ENCODE measurements at regions of chr5 and their contacts with region 1.

Region 1: GRCh38 chr5:178075840-178076548 is 37.3 kb upstream of the N4BP3 start:
- DNase-seq: peak; percentile 89
- H3K4me3 ChIP-seq: peak overlapping the region; percentile 50
- H3K27ac ChIP-seq: no peak overlapping the region
- H3K4me1 ChIP-seq: peaks cover 44% of the 10 kb centered on the region
- CTCF ChIP-seq: peak; percentile 100

Region 2: DNA sequence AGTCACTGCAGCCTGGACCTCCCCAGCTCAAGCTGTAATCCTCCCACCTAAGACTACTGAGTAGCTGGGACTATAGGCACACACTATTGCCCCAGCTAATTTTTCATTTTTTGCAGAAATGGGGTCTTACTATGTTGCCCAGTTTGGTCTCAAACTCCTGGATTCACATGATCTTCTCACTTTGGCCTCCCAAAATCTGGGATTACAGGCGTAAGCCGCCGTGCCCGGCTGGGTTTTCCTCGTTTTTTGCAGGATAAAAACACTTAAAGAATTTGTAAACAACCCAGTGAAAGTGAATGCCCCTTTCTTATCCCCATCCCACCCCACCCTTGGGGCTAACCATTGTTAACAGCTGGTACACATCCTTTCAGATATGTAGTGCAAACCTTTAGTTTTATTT is 1667.4 kb before region 1 on chr5:
- CTCF ChIA-PET with region 1: no interaction called
- POLR2A ChIA-PET with region 1: interaction called, 10 read pairs
- intact Hi-C with region 1: no loop called
- DNase-seq: no peak
- H3K4me3 ChIP-seq: no peak overlapping the region
- H3K27ac ChIP-seq: no peak overlapping the region
- H3K4me1 ChIP-seq: peaks cover 6% of the 10 kb centered on the region
- CTCF ChIP-seq: no peak

Region 3: DNA sequence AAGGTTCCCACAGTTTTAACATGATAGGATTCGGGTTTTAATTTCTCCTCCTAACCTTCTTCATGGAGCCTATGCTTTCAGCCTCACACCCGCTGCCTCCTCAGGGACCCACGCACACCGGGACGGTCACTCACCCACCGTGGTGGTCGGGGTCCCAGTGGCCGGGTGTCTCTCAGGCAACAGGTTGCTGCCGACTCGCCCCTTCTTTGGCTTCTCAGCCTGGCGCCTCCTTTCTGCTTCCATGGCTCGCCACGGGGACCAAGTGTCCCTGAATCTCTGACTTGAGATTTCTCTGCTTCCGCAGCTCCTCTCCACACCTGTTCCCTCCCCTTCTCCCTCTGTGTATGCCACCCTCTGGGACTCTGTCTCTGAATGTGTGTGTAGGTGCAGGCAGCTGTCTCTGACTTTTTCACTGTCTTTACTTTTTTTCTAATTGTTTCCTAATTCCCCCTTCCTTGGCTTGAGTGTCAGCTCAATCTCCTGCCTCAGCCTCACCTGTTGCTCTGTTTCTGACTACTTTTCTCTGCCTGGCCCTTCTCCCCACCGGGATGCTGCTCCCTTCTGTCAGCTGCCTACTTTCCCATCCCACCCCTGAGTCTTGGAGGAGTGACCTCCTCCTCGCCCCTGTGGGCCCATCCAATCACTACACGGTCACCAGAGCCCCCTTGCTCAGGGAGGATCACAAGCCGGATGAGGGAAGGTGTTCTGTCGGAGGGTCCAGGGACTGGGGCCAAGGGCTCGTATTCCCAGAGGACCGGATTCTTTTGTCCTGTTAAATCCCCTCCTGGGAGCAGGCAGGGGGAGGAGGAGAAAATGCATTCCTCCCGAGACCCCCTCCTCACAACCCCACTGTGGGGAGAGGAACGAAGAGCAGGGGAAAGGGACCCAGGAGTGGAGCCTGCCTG is 80.1 kb before region 1 on chr5 and contains the start of gene PROP1:
- CTCF ChIA-PET with region 1: no interaction called
- POLR2A ChIA-PET with region 1: no interaction called
- intact Hi-C with region 1: no loop called
- DNase-seq: no peak
- H3K4me3 ChIP-seq: no peak within 1 kb of the TSS
- H3K27ac ChIP-seq: no peak within 1 kb of the TSS
- H3K4me1 ChIP-seq: peaks cover 6% of the 10 kb centered on the region
- CTCF ChIP-seq: no peak
- total RNA-seq, gene PROP1: not detected in 2 replicates

Region 4: DNA sequence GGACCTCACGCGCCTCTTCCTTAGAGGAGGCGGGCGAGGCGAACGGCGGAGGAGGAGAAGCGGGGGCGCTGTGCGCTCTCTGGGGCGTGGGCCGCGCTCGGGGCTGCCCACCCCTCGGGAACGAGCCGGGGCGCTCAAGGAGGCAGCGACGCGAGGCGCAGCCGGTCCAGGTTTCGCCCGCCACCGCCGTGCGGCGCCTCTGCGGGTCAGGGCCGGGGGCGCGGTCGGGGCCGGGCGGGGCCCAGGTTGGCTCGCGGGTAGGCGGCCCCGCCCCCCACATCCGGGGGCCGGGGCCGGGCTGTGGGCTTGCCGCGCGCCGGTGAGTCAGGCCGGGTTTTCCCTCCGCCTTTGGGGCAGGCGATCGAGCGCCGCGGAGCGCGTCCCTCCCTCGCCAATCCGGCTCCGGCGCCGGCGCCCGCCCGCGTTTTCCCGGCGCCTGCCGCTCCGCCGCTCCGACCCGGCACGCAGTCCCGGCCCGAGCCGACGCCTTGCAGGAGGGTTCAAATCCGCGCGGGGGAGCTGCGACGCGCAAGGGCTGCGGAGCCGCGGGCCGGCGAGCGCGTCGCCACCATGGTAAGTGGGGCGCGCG is 37.3 kb after region 1 on chr5 and contains the start of gene N4BP3:
- CTCF ChIA-PET with region 1: interaction called, 4 read pairs
- POLR2A ChIA-PET with region 1: interaction called, 6 read pairs
- intact Hi-C with region 1: loop called (anchors 1 kb)
- DNase-seq: peak; percentile 93
- H3K4me3 ChIP-seq: peak within 1 kb of the TSS; percentile 95
- H3K27ac ChIP-seq: peak within 1 kb of the TSS; percentile 90
- H3K4me1 ChIP-seq: peaks cover 49% of the 10 kb centered on the region
- CTCF ChIP-seq: peak; percentile 57
- total RNA-seq, gene N4BP3: 23.7 and 28.3 TPM in 2 replicates

Region 5: GRCh38 chr5:178120868-178121357 is 44.9 kb after region 1 on chr5:
- CTCF ChIA-PET with region 1: interaction called, 17 read pairs
- POLR2A ChIA-PET with region 1: interaction called, 6 read pairs
- intact Hi-C with region 1: loop called (anchors 2 kb)
- DNase-seq: peak; percentile 98
- H3K4me3 ChIP-seq: peak overlapping the region; percentile 37
- H3K27ac ChIP-seq: peak overlapping the region; percentile 90
- H3K4me1 ChIP-seq: peaks cover 81% of the 10 kb centered on the region
- CTCF ChIP-seq: peak; percentile 87

Region 6: DNA sequence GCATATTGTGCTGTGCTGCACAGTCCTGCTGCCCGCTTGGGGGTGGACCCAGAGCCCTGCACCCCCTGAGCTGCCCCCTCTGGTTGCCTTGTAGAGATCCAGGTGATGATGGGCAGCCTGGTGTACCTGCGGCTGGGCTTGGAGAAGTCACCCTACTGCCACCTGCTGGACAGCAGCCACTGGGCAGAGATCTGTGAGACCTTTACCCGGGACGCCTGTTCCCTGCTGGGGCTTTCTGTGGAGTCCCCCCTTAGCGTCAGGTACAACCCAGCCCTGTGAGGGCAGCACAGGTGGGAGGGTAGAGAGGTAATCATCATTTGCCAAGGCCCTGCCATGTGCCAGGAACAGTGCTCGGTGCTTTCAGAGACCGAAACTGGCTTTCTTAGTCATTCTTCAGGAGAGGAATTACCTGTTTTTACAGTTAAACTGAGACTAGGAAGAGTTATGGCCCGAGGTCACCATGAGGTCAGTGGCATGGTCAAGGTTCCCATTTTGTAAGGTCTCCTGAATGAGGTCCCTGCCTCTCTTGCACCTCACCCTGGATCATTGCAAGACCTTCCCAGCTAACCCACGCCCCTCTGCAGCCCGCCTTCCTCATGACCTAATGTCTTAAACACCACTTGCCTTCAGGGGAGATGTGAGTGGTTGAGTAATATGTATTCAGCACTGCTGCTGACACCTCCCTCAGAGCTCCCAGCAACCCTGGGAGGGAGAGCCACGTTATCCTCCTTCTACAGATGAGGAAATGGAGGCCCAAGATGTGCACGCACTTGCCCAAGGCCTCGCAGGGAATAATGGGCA is 70.2 kb after region 1 on chr5:
- CTCF ChIA-PET with region 1: interaction called, 15 read pairs
- POLR2A ChIA-PET with region 1: no interaction called
- intact Hi-C with region 1: loop called (anchors 1 kb)
- DNase-seq: peak; percentile 81
- H3K4me3 ChIP-seq: no peak overlapping the region
- H3K27ac ChIP-seq: no peak overlapping the region
- H3K4me1 ChIP-seq: peaks cover 4% of the 10 kb centered on the region
- CTCF ChIP-seq: peak; percentile 90

Region 7: DNA sequence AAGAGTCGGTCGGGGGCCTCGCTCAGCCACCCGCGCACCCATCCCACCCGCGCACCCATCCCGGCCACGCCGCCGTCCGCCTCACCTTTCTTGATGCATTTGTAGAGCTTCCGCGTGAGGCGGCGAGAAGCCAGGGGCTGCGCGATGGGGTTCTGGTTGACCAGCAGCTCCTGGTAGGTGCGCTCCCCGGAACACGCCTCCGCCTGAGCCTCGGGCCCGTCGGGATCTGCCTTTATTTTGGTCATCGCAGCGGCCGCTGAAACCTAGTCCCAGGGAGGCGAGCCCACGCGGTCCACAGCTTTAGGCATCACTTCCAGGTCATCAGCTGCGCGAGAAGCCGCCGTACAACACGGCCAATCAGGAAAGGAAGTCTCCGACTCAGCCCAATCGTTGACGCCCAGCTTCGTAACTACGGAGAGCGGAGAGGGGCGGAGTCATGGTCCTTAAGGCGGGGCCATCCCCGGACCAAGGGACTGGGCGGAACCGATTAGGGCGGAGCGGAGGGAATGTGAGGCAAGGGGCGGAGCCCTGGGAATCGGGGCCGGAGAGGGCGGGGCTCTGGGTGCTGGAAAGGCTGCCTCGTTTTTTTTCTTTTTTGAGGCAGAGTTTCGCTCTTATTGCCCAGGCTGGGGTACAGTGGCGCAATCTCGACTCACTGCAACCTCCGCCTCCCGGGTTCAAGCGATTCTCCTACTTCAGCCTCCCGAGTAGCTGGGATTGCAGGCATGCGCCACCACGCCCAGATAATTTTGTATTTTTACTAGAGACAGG is 77.8 kb after region 1 on chr5 and contains the start of gene NHP2:
- CTCF ChIA-PET with region 1: interaction called, 11 read pairs
- POLR2A ChIA-PET with region 1: interaction called, 14 read pairs
- intact Hi-C with region 1: no loop called
- DNase-seq: peak; percentile 98
- H3K4me3 ChIP-seq: peak within 1 kb of the TSS; percentile 85
- H3K27ac ChIP-seq: peak within 1 kb of the TSS; percentile 21
- H3K4me1 ChIP-seq: peaks cover 42% of the 10 kb centered on the region
- CTCF ChIP-seq: no peak
- total RNA-seq, gene NHP2: 309 and 344 TPM in 2 replicates

Region 8: GRCh38 chr5:178163772-178164735 is 88.1 kb after region 1 on chr5:
- CTCF ChIA-PET with region 1: interaction called, 23 read pairs
- POLR2A ChIA-PET with region 1: interaction called, 7 read pairs
- intact Hi-C with region 1: loop called (anchors 1 kb)
- DNase-seq: peak; percentile 90
- H3K4me3 ChIP-seq: peak overlapping the region; percentile 38
- H3K27ac ChIP-seq: no peak overlapping the region
- H3K4me1 ChIP-seq: peaks cover 30% of the 10 kb centered on the region
- CTCF ChIP-seq: peak; percentile 98

Measured in OCI-LY7 (cell line).